Activated CD8-positive, alpha-beta T cell treated with anti-CD3 and anti-CD28 coated beads for 36 hours (primary cell): ENCODE measurements at regions of chr22 and their contacts with region 1.

Region 1: DNA sequence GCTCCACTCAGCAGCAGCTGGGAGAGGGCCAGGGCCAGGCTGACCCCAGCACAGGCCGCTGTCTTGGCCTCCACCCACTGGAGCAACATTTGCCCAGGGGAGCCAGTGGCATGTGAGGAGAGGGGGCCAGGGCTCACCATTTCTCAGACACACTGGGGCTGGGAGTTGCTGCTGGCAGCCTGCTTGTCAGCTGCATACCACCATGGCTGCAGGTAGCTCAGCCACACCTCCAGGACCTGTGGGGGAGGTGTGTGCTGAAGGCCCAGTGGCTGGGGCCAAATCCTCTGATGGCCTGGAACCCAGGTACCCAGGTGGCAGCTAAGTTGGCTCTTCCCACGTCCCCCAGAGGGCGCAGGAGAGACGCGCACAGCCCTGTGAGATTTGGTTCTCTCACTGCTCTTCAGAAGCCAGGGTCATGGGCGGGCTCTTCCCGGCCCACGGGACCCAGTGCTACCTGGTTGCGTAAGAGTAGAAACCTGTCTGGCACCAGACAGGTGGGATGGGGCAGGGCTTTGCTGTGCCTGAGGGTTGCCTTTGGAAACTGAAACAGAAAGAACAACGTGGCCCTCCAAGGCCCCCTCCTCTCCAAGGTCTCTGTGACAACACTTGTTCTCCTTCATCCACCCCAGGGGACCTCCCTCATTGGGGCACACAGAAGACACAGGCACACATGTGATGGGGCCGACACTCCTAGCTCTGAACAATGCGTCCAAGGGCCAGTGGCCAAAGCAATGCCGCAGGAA is 98.8 kb downstream of the MED15 start:
- DNase-seq: peak; percentile 84
- ATAC-seq: peak; percentile 94
- H3K4me3 Mint-ChIP-seq: no peak overlapping the region
- H3K27ac Mint-ChIP-seq: no peak overlapping the region
- H3K4me1 Mint-ChIP-seq: peaks cover 10% of the 10 kb centered on the region
- H3K27me3 Mint-ChIP-seq: no peaks in the 10 kb centered on the region
- CTCF ChIP-seq: peak; percentile 90

Region 2: DNA sequence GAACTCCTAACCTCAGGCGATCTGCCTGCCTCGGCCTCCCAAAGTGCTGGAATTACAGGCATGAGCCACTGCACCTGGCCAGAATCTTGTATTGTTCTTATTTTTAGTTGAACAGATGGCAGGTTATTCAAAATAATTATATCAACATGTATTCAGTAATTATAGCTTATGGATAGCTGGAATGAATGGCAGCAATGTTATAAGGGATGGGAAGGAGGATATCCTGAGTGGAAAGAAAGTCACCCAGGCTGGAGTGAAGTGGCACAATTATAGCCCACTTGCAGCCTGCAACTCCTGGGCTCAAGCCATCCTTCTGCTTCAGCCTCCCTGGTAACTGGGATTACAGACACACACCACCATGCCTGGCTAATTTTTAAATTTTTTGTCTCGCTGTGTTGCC is 10.8 kb before region 1 on chr22:
- CTCF ChIA-PET with region 1: interaction called, 10 read pairs
- POLR2A ChIA-PET with region 1: no interaction called
- intact Hi-C with region 1: no loop called
- DNase-seq: no peak
- ATAC-seq: no peak
- H3K4me3 Mint-ChIP-seq: no peak overlapping the region
- H3K27ac Mint-ChIP-seq: no peak overlapping the region
- H3K4me1 Mint-ChIP-seq: peaks cover 2% of the 10 kb centered on the region
- H3K27me3 Mint-ChIP-seq: no peaks in the 10 kb centered on the region
- CTCF ChIP-seq: no peak

Region 3: GRCh38 chr22:20618488-20618887 is 12.3 kb after region 1 on chr22:
- CTCF ChIA-PET with region 1: interaction called, 11 read pairs
- POLR2A ChIA-PET with region 1: no interaction called
- intact Hi-C with region 1: no loop called
- DNase-seq: no peak
- ATAC-seq: no peak
- H3K4me3 Mint-ChIP-seq: no peak overlapping the region
- H3K27ac Mint-ChIP-seq: no peak overlapping the region
- H3K4me1 Mint-ChIP-seq: no peaks in the 10 kb centered on the region
- H3K27me3 Mint-ChIP-seq: no peaks in the 10 kb centered on the region
- CTCF ChIP-seq: no peak

Region 4: GRCh38 chr22:20741634-20742581 is 135.7 kb after region 1 on chr22:
- CTCF ChIA-PET with region 1: interaction called, 12 read pairs
- POLR2A ChIA-PET with region 1: no interaction called
- intact Hi-C with region 1: no loop called
- DNase-seq: peak; percentile 67
- ATAC-seq: no peak
- H3K4me3 Mint-ChIP-seq: no peak overlapping the region
- H3K27ac Mint-ChIP-seq: no peak overlapping the region
- H3K4me1 Mint-ChIP-seq: no peaks in the 10 kb centered on the region
- H3K27me3 Mint-ChIP-seq: no peaks in the 10 kb centered on the region
- CTCF ChIP-seq: peak; percentile 88